Caco-2 (cell line): ENCODE measurements at regions of chr5 and their contacts with region 1.

Region 1: DNA sequence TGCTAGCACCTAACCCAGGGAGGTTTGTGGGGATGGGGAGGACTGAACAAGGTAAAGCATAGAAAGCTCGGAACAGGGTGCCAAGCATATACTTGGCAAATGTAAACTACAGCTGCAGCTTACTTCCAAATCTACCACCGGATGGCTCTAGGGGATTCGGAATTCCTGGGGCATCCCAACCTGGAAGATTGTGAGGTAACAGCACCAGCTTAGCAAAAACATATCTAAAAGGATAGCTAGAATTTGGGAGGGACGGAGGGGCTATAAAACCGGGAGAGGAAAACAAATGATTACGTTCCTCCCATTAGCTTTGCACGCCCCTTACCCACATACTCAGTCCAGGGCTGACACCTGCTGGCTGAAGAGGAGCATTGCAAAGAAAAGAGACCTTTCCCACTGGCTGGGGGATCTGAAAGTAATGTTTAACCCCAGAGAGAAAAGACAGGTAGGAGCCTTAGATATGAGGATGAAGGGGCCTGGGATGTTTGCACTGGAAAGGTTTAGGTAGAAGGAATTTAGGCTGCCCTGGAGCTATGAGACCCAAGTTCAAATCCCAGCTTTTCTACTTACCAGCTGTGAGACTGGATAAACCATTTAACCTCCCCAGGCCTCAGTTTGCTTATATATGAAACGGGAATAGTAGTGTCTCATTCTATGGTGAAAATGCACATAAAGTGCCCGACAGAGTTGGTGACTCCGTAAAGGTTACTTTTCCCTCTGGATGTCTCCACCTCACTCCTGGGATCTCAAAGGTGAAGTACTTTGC is 73.6 kb downstream of the FAM114A2 start:
- DNase-seq: peak; percentile 56 to 69
- H3K4me3 ChIP-seq: no peak overlapping the region
- H3K4me3 Mint-ChIP-seq: peak overlapping the region; percentile 22
- H3K27ac Mint-ChIP-seq: no peak overlapping the region
- H3K4me1 ChIP-seq: 0 out of 2 replicates have a peak, but pooled peaks cover under 1% of the 10 kb centered on the region
- H3K4me1 Mint-ChIP-seq: peaks cover 10% of the 10 kb centered on the region
- H3K27me3 ChIP-seq: no peaks in the 10 kb centered on the region
- H3K27me3 Mint-ChIP-seq: peaks cover 5% of the 10 kb centered on the region
- CTCF ChIP-seq: peak; percentile 91 to 95

Region 2: GRCh38 chr5:152532714-152533113 is 1432.3 kb before region 1 on chr5:
- CTCF ChIA-PET with region 1: interaction called, 7 read pairs
- POLR2A ChIA-PET with region 1: no interaction called
- intact Hi-C with region 1: loop called (anchors 1 kb)
- DNase-seq: peak in 1 of 2 experiments; percentile 43
- H3K4me3 ChIP-seq: no peak overlapping the region
- H3K4me3 Mint-ChIP-seq: no peak overlapping the region
- H3K27ac Mint-ChIP-seq: no peak overlapping the region
- H3K4me1 ChIP-seq: no peaks in the 10 kb centered on the region
- H3K4me1 Mint-ChIP-seq: no peaks in the 10 kb centered on the region
- H3K27me3 ChIP-seq: no peaks in the 10 kb centered on the region
- H3K27me3 Mint-ChIP-seq: peaks cover 19% of the 10 kb centered on the region
- CTCF ChIP-seq: peak; percentile 56 to 67

Region 3: GRCh38 chr5:152592397-152592796 is 1372.7 kb before region 1 on chr5:
- CTCF ChIA-PET with region 1: no interaction called
- POLR2A ChIA-PET with region 1: no interaction called
- intact Hi-C with region 1: loop called (anchors 1 kb)
- DNase-seq: no peak
- H3K4me3 ChIP-seq: no peak overlapping the region
- H3K4me3 Mint-ChIP-seq: no peak overlapping the region
- H3K27ac Mint-ChIP-seq: no peak overlapping the region
- H3K4me1 ChIP-seq: no peaks in the 10 kb centered on the region
- H3K4me1 Mint-ChIP-seq: no peaks in the 10 kb centered on the region
- H3K27me3 ChIP-seq: no peaks in the 10 kb centered on the region
- H3K27me3 Mint-ChIP-seq: no peaks in the 10 kb centered on the region
- CTCF ChIP-seq: peak in 1 of 2 experiments; percentile 17

Region 4: DNA sequence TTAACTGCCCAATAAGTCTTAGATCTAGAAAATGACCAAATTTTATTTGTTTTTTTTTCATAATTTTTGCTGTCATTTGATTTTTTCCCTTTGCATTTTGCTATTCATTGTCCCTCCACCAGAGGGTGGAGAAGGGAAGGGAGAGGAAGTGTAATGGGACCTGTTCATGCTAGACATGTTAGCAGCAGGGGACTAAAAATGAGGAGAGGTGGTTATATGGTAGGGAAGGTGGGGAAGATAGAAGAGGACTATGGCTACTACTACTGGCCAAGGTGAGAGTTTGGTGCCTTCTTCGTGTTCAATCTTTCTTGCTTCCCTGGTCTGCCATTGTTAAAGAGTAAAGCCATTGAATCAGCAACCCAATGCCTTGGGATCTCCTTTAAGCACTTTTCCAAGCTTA is 468.2 kb before region 1 on chr5:
- CTCF ChIA-PET with region 1: interaction called, 5 read pairs
- POLR2A ChIA-PET with region 1: no interaction called
- intact Hi-C with region 1: loop called (anchors 1 kb)
- DNase-seq: peak in 1 of 2 experiments; percentile 36
- H3K4me3 ChIP-seq: no peak overlapping the region
- H3K4me3 Mint-ChIP-seq: no peak overlapping the region
- H3K27ac Mint-ChIP-seq: no peak overlapping the region
- H3K4me1 ChIP-seq: no peaks in the 10 kb centered on the region
- H3K4me1 Mint-ChIP-seq: peaks cover 2% of the 10 kb centered on the region
- H3K27me3 ChIP-seq: peaks cover 1% of the 10 kb centered on the region; the same call in 1 of the 2 replicates
- H3K27me3 Mint-ChIP-seq: peaks cover 8% of the 10 kb centered on the region
- CTCF ChIP-seq: peak; percentile 54 to 83

Region 5: GRCh38 chr5:153827397-153827796 is 137.7 kb before region 1 on chr5:
- CTCF ChIA-PET with region 1: interaction called, 6 read pairs
- POLR2A ChIA-PET with region 1: no interaction called
- intact Hi-C with region 1: loop called (anchors 2 kb)
- DNase-seq: no peak
- H3K4me3 ChIP-seq: no peak overlapping the region
- H3K4me3 Mint-ChIP-seq: no peak overlapping the region
- H3K27ac Mint-ChIP-seq: no peak overlapping the region
- H3K4me1 ChIP-seq: no peaks in the 10 kb centered on the region
- H3K4me1 Mint-ChIP-seq: no peaks in the 10 kb centered on the region
- H3K27me3 ChIP-seq: no peaks in the 10 kb centered on the region; the same call in 1 of the 2 replicates
- H3K27me3 Mint-ChIP-seq: peaks cover 15% of the 10 kb centered on the region
- CTCF ChIP-seq: peak in 1 of 2 experiments; percentile 12